ENCODE measurements at regions of chr12 and their contacts with region 1.

Region 1: DNA sequence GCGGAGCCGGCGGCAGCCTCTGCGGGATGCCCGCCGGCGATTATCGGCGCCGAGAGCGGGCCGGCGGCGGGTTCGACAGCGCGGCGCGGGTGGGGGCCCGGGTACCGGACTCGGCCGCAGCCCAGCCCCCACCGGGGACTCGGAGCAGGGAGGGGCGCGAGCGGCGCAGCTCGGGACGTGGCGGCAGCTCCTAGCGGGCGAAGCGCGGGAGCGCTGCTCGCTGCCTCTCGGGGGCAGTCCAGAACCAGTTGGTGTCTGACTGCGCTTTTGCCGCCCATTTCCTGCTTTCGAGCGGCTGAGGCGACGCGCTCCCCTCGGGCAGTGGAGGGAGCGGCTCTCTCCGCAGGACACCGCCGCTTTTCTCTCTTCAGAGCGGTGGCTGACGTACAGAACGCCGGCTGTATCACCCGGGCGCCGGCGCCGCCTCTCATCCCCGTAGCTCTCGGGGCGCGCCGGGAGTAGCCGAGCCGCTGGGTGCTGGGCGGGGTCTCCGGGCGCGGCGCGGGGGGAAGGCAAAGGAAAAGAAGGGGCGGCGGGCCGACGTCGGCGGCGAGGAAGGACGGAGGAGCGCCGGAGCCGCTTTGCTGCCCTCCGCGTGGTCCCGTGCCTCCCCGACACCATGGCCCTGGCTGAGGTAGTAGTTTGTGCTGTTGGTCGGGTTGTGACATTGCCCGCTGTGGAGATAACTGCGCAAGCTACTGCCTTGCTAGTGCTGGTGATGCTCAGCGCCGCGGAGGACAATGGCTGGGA is 136.6 kb downstream of the MON2 start:
- DNase-seq: peak in 1 of 2 donors; percentile 90
- H3K4me3 ChIP-seq: peak overlapping the region; percentile 68 to 73
- H3K27ac ChIP-seq: peak overlapping the region; percentile 99
- H3K4me1 ChIP-seq: peaks cover 33% of the 10 kb centered on the region
- H3K27me3 ChIP-seq: no peaks in the 10 kb centered on the region
- CTCF ChIP-seq: peak in 2 of 3 experiments; percentile 43 to 52
- POLR2A ChIP-seq: peak in 1 of 2 donors; percentile 47

Region 2: DNA sequence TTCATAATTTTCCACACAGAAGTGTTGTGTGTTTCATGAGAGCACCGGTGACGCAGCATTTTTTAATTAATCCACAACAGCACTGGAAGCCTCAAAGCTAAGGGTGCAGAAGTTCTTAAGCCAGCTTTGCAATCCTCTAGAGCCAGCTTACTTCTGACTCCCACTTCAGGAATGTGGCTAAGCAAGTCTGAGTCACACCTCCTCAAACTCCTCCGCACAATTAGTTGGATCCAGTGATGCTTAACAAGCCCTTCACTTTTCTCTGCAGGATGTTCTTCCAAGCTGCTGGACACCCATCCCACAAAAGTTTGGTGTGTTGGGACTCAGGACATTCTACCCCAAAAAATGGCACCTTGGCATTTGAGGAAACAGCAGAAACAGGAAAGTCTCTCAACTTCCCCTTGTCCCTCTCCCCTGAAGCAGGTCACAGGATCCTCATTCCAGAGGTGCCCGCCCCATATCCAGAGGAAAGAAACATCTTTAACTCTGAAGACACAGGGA is 121.8 kb after region 1 on chr12:
- intact Hi-C with region 1: loop called (anchors 10 kb)
- DNase-seq: peak in 1 of 2 donors; percentile 93
- H3K4me3 ChIP-seq: no peak overlapping the region
- H3K27ac ChIP-seq: no peak overlapping the region
- H3K4me1 ChIP-seq: peaks cover 19% of the 10 kb centered on the region
- H3K27me3 ChIP-seq: no peaks in the 10 kb centered on the region
- CTCF ChIP-seq: no peak
- POLR2A ChIP-seq: no peak

Region 3: GRCh38 chr12:62793256-62794217 is 190.3 kb after region 1 on chr12:
- intact Hi-C with region 1: loop called (anchors 5 kb)
- DNase-seq: no peak
- H3K4me3 ChIP-seq: no peak overlapping the region
- H3K27ac ChIP-seq: no peak overlapping the region
- H3K4me1 ChIP-seq: no peaks in the 10 kb centered on the region
- H3K27me3 ChIP-seq: no peaks in the 10 kb centered on the region
- CTCF ChIP-seq: peak; percentile 83 to 93 (median 91)
- POLR2A ChIP-seq: no peak

Region 4: DNA sequence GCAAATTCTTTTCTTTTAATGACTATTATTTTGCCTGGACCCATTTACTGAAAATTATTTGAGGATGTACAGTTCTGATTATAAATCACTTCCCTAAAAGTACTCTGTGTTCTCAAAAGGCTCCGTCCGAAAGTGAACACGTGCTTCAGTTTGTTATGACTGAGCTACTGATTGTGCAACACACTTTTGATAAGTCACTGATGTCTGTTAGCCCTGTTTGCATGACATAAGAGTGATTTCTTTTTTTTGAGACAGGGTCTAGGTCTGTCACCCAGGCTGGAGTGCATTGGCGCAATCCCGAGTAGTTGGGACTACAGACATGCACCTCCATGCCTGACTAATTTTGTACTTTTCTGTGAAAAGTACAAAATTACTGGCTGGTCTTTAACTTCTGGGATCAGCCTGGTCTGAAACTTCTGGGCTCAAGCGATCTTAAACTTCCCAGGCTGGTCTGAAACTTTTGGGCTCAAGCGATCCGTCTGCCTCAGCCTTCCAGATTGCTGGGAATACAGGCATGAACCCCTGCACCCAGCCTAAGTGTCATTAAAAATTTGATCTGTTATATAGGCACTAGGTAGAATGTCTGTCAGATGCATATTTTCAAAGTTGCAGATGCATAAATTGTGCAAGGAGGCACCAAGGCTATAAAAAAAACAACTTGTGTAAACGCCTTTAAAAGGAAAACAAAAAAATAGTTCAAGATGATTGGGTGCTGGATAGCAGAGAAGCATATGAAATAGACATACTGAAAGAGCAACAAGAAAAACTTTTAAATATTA is 1352.8 kb after region 1 on chr12:
- intact Hi-C with region 1: no loop called
- DNase-seq: no peak
- H3K4me3 ChIP-seq: peak overlapping the region; percentile 17 to 20
- H3K27ac ChIP-seq: peak overlapping the region; percentile 60
- H3K4me1 ChIP-seq: peaks cover 11% of the 10 kb centered on the region
- H3K27me3 ChIP-seq: no peaks in the 10 kb centered on the region
- CTCF ChIP-seq: no peak
- POLR2A ChIP-seq: no peak

Measured in vagina (tissue), 2 donors.